ENCODE measurements at regions of chr7 and their contacts with region 1.

Region 1: DNA sequence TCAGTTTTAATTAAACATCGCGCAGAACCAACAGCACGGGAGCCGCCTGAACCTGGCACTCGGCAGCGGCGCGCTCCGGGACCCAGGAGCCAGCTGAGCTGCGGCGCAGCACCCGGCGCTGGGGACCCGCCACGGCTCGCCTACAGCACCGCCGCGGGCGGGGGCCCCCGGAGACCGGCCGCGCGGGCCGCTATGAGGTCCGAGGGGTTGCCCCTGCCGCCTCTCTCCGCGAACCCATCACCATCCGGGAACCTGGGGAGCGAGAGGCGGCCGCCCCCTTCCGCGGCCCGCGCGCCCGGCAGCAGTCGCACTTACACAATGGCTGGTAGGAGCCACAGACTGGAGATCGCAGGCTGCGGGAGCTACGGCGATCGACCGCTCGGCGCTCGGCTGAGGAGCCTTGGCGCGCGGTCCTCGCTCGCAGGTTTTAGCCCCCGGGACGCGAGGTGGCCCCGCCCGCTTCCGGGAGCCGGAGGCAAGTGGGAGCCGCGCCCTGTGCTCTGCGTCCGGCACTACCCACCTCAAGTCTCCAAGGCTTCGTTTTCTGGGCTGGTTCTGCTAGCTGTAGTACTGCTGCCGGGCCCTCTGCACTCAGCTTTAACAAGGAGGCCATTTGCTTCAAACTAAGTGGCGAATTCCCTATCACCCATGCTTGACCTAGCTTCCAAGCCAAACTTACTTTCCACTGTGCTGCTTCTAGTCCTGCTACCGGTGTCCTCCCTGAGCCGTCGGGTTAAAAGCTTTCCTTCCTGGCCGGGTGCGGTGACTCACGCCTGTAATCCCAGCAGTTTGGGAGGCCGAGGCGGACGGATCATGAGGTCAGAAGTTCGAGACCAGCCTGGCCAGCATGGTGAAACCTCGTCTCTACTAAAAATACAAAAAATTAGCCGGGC is at the start of gene TPK1:
- H3K4me3 ChIP-seq: peak within 1 kb of the TSS; percentile 71
- H3K27ac ChIP-seq: peak within 1 kb of the TSS; percentile 40; the same call in 1 of the 2 replicates
- H3K4me1 ChIP-seq: no peaks in the 10 kb centered on the region
- CTCF ChIP-seq: peak; percentile 23; the same call in 1 of the 2 replicates

Region 2: DNA sequence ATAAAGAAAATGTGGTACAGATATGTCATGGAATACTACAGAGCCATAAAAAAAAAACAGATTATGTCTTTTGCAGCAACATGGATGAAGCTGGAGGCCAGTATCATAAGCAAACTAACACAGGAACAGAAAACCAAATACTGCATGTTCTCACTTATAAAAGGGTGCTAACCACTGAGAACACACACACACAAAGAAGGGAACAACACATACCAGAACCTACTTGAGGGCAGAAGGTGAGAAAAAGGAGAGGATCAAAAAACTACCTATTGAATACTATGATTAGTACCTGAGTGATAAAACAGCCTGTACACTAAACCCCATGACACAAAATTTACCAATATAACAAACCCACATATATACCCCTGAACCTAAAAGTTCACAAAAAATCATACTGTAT is 144.7 kb before region 1 on chr7:
- CTCF ChIA-PET with region 1: no interaction called
- POLR2A ChIA-PET with region 1: no interaction called
- H3K4me3 ChIP-seq: no peak overlapping the region
- H3K27ac ChIP-seq: no peak overlapping the region
- H3K4me1 ChIP-seq: no peaks in the 10 kb centered on the region
- CTCF ChIP-seq: no peak

Region 3: GRCh38 chr7:144822223-144822622 is 13.7 kb before region 1 on chr7:
- CTCF ChIA-PET with region 1: interaction called, 3 read pairs
- POLR2A ChIA-PET with region 1: interaction called, 27 read pairs
- H3K4me3 ChIP-seq: no peak overlapping the region
- H3K27ac ChIP-seq: no peak overlapping the region
- H3K4me1 ChIP-seq: no peaks in the 10 kb centered on the region
- CTCF ChIP-seq: no peak

Measured in HEK293 (cell line).